ENCODE measurements at regions of chr9 and their contacts with region 1.

Region 1: DNA sequence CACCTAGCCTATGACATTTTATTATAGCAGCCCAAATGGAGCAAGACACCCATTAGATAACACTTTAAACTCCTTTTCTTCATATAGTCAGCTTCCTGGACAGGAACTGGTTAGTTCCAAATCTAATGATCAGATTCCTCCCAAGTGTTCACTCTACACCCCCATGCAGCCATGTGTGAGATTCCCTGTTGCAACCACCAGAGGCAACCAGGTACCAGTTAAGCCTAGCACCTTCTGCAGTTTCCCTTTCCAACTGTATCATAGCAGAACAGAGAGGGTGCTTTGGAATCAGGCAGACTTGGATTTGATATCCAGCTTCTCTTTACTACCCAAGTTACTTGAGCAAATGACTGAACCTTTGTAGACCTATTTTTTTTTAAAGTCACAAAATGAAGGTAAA is 296.6 kb upstream of the PCSK5 start:
- DNase-seq: no peak
- ATAC-seq: no peak

Region 2: DNA sequence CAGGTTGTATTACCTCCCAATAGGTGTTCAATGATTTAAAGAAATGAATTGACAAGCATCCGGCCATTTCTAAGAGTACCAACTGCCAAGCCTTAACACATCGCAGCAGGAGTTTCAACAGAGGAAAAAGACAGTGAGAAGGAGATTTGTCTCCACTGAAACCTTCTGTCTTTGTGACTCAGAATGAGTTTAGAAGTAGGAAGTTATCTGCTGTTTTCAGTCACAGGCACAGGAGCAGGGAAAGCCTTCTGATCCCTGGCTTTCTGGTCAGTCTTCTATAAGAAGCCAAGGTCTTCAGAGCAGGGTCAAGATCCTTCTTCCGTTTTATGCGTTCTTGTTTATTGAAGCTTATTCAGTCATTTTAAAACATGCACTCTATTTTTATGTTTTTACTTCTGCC is 94.1 kb before region 1 on chr9:
- intact Hi-C with region 1: no loop called
- DNase-seq: no peak
- ATAC-seq: peak; percentile 59

Region 3: DNA sequence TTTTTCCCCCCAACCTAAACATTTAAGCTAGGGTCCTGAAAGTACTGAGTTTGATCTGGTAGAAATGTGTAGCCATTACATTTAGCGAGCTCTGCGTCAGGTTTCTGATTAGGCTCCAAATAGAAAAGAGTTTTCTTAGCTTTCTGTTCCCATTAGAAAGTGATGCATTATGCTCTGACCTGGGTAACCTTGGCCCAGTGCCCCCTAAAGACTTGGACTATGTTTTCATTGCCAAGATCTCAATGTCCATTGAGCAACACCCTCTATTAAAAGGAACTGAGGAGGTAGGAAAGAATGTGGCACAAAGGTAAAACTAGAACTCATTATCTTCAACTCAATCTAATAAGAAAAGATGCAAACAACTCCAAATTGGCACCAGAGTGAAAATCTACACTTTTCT is 62.3 kb before region 1 on chr9:
- intact Hi-C with region 1: no loop called
- DNase-seq: peak; percentile 37
- ATAC-seq: no peak

Region 4: GRCh38 chr9:75644649-75645048 is 50.7 kb after region 1 on chr9:
- intact Hi-C with region 1: loop called (anchors 2 kb)
- DNase-seq: peak; percentile 56
- ATAC-seq: peak; percentile 18

Measured in Right ventricle myocardium inferior (tissue), 1 donor.